ENCODE measurements at regions of chr15 and their contacts with region 1.

Region 1: DNA sequence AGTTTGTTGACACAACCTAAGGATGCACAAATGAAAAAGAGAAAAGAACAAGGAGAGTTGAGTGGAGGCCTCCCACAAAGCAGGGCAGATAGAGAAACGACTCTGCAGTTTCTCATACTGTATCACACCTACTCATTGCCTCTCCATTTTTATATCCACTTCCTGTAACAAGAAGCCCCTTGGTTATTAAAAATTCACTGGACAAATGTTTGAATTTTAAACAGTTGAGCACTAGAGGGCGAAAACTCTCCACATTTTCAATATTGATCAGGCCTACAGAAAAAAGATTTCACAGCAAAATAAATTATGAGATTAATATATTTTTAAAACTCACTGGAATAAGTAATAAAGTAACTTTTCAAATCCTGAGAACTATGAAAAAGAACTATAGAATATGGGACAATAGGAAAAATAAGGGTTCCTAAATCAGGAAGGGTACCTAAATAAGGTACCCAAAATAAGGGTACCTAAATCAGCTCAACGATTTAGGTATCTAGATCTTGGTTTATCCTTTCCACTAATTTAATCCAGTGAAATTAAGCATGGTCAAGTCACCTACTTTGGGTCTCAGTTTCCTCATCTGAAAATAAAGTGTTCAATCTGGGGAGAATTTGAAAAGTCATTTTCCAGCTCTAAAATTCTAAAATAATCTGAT is 47.0 kb upstream of the PPIB start:
- DNase-seq: peak; percentile 33 to 64
- ATAC-seq: peak; percentile 60 to 75; a peak in 4 of 6 replicates
- H3K4me3 ChIP-seq: no peak overlapping the region
- H3K27ac ChIP-seq: no peak overlapping the region
- H3K4me1 ChIP-seq: no peaks in the 10 kb centered on the region
- CTCF ChIP-seq: peak; percentile 92
- EP300 ChIP-seq: no peak
- POLR2A ChIP-seq: no peak
- RAD21 ChIP-seq: peak; percentile 89 to 93

Region 2: DNA sequence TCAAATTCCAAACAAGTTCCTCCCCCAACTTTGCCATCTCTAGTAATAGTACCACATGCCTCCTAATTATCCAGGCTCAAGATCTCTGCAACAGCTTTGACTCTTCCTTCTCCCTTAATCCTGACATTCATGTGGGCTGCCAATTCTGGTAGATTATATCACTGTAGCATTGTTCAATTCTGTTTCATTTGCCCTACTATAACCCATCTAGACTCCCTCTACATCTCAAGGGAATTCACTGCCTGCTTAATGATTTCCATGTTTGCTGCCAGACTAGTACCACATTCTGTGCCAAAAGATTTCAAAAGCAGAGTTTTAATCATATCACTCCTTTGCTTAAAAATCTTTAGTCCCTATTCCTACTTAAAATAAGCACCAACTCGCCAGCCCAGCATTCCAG is 12.4 kb before region 1 on chr15:
- CTCF ChIA-PET with region 1: interaction called, 10 read pairs
- POLR2A ChIA-PET with region 1: no interaction called
- DNase-seq: no peak
- ATAC-seq: no peak
- H3K4me3 ChIP-seq: no peak overlapping the region
- H3K27ac ChIP-seq: no peak overlapping the region
- H3K4me1 ChIP-seq: no peaks in the 10 kb centered on the region
- CTCF ChIP-seq: no peak
- EP300 ChIP-seq: no peak
- POLR2A ChIP-seq: no peak
- RAD21 ChIP-seq: no peak

Region 3: GRCh38 chr15:64222573-64223366 is 13.0 kb after region 1 on chr15:
- CTCF ChIA-PET with region 1: interaction called, 10 read pairs
- POLR2A ChIA-PET with region 1: no interaction called
- DNase-seq: no peak
- ATAC-seq: no peak
- H3K4me3 ChIP-seq: no peak overlapping the region
- H3K27ac ChIP-seq: no peak overlapping the region
- H3K4me1 ChIP-seq: peaks cover 9% of the 10 kb centered on the region; the same call in 2 of the 3 replicates
- CTCF ChIP-seq: no peak
- EP300 ChIP-seq: no peak
- POLR2A ChIP-seq: no peak
- RAD21 ChIP-seq: no peak

Region 4: DNA sequence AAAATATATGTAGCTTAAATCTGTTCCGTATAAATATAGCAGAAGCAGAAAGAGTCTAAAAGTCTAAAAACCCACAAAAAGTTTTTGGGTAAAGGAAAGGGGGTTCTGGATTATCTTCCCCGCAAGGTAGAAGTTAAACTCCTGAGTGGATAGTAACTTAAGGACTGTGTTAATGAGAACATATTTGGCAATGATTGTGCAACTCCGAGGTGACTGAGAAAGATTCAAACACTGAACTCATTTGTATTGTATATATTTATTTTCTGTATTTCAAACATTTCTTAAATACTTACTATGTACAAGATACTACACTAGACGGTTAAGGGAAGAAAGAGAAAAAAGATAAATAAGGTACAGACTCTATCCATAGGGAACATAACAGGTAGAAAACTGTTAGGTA is 25.7 kb after region 1 on chr15:
- CTCF ChIA-PET with region 1: interaction called, 11 read pairs
- POLR2A ChIA-PET with region 1: no interaction called
- DNase-seq: no peak
- ATAC-seq: no peak
- H3K4me3 ChIP-seq: no peak overlapping the region
- H3K27ac ChIP-seq: no peak overlapping the region
- H3K4me1 ChIP-seq: peaks cover 28% of the 10 kb centered on the region
- CTCF ChIP-seq: no peak
- EP300 ChIP-seq: no peak
- POLR2A ChIP-seq: no peak
- RAD21 ChIP-seq: no peak

Region 5: DNA sequence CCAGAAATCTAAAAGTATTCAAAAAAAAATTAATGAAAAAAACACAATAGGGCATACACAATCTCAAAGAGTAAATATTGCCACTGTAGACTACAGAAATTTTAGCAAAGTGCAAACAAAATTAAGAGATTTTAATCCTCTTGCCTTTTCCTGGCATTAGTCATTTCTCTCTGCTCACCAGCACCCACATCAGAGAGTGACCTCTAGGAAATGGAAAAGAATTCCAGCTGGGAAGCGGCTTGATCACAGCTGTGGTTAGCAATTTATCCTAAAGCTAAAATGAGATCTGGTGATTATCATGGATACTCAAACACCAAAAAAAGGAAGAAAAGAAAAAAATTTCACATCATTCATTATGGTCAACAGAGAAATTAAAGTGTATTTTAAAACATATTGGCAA is 138.6 kb after region 1 on chr15:
- CTCF ChIA-PET with region 1: interaction called, 11 read pairs
- POLR2A ChIA-PET with region 1: no interaction called
- DNase-seq: no peak
- ATAC-seq: no peak
- H3K4me3 ChIP-seq: no peak overlapping the region
- H3K27ac ChIP-seq: no peak overlapping the region
- H3K4me1 ChIP-seq: peaks cover 18% of the 10 kb centered on the region
- CTCF ChIP-seq: no peak
- EP300 ChIP-seq: no peak
- POLR2A ChIP-seq: no peak
- RAD21 ChIP-seq: no peak

Region 6: GRCh38 chr15:64355944-64356709 is 146.3 kb after region 1 on chr15 and contains the start of gene CSNK1G1:
- CTCF ChIA-PET with region 1: interaction called, 12 read pairs
- POLR2A ChIA-PET with region 1: interaction called, 3 read pairs
- DNase-seq: peak; percentile 93 to 98
- ATAC-seq: peak; percentile 98 to 99
- H3K4me3 ChIP-seq: peak within 1 kb of the TSS; percentile 82
- H3K27ac ChIP-seq: peak within 1 kb of the TSS; percentile 90 to 94
- H3K4me1 ChIP-seq: peaks cover 13% of the 10 kb centered on the region
- CTCF ChIP-seq: peak; percentile 79
- EP300 ChIP-seq: no peak
- POLR2A ChIP-seq: peak; percentile 44; the same call in 1 of the 2 replicates
- RAD21 ChIP-seq: peak; percentile 70 to 83
- polyA plus RNA-seq, gene CSNK1G1: 31.8 and 36.3 TPM in 2 replicates

Region 7: GRCh38 chr15:64361259-64361658 is 151.5 kb after region 1 on chr15:
- CTCF ChIA-PET with region 1: interaction called, 12 read pairs
- POLR2A ChIA-PET with region 1: interaction called, 3 read pairs
- DNase-seq: no peak
- ATAC-seq: no peak
- H3K4me3 ChIP-seq: no peak overlapping the region
- H3K27ac ChIP-seq: no peak overlapping the region
- H3K4me1 ChIP-seq: peaks cover 5% of the 10 kb centered on the region; the same call in 2 of the 3 replicates
- CTCF ChIP-seq: no peak
- EP300 ChIP-seq: no peak
- POLR2A ChIP-seq: no peak
- RAD21 ChIP-seq: no peak

Measured in A549 (cell line).